Naive thymus-derived CD4-positive, alpha-beta T cell (primary cell): ENCODE measurements at regions of chr19 and their contacts with region 1.

Region 1: DNA sequence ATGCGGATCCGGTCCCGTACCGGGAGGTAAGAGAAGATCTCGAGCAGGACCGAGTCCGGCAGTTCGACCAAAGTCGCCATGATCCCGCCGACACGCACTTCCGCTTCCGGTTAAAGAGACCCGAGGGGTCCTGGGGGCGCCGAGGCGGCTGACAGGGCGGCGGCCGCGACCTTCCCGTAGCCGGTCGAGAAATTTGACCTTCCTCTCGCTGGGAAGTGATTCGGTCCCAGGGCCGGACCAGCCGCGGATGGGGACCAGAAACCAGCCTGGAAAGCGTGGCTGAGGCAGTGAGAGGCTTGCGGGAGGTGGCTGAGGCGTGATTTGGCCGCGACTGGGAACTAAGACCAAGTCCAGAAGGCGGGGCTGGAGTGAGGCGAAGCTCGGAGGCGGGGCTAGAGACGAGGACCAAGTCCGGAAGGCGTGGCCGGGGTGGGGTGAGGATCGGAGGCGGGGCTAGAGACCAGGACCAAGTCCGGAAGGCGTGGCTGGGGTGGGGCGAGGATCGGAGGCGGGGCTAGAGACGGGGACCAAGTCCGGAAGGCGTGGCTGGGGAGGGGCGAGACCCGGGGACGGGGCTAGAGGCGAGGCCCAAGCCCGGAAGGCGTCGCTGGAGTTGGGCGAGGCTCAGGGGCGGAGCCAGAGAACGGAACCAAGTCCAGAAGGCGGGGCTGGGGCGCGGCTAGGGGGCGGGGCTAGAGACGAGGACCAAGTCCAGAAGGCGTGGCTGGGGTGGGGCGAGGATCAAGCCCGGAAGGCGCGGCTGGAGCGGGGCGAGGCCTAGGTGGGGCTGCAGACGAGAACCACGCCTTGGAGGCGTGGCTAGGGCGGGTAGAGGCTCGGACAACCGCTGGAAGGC is at the start of gene FBXL12:
- DNase-seq: peak; percentile 99 to 100 (median 100)
- ATAC-seq: peak; percentile 93
- H3K4me3 ChIP-seq: peak within 1 kb of the TSS; percentile 100
- H3K4me3 Mint-ChIP-seq: peak within 1 kb of the TSS; percentile 81 to 96 (median 90)
- H3K27ac ChIP-seq: peak within 1 kb of the TSS; percentile 99
- H3K27ac Mint-ChIP-seq: peak within 1 kb of the TSS; percentile 78 to 97 (median 90)
- H3K4me1 ChIP-seq: peaks cover 9 to 14% of the 10 kb centered on the region in 2 donors
- H3K4me1 Mint-ChIP-seq: peaks cover 19 to 43% (median 30%) of the 10 kb centered on the region in 7 donors
- H3K27me3 ChIP-seq: no peaks in the 10 kb centered on the region
- H3K27me3 Mint-ChIP-seq: no peaks in the 10 kb centered on the region
- total RNA-seq, gene FBXL12: 16.8 to 36.2 (median 34.0) TPM

Region 2: DNA sequence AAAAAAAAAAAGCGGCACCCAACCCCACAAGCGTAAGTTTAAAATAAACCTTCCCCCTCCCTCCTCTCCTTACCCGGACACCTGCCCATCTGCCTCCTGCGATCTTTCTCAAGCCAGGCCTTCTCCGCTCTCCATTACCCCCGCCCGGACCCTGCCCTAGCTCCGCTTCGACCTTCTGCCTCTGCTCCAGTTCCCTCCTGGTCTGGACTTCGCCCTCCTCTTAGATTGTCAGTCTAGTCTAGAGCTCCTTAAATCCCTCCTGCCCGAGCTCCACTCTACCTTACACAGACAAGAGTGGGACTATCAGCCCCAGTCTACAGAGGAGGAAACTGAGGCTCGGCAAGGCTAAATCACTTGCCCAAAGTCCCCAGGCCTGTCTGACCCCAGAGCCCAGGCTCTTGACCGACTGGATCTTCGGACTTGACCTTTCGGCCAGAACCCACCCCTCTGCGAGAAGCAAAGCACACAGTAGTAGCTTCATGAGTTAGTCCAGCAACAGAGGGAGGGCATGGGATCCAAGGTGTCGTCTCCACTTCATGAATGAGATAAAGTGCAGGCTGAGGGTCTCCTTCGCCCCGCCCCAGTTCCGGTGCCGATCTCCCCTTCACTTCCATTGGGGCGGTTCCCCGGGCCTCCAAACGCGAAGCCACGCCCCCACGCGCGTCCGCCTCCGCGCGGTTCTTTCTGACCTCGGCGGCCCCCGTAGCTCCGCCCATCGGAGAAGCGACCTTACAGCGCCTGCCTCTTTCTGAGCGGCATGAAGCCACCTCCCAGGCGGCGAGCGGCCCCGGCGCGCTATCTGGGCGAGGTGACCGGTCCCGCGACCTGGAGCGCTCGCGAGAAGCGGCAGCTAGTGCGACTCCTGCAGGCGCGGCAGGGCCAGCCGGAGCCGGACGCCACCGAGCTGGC is 1899.1 kb before region 1 on chr19 and contains the start of gene SNAPC2:
- CTCF ChIA-PET with region 1: no interaction called
- POLR2A ChIA-PET with region 1: no interaction called
- intact Hi-C with region 1: loop called in 1 of 2 experiments (anchors 5 kb)
- DNase-seq: peak; percentile 95 to 99 (median 98)
- ATAC-seq: peak; percentile 71
- H3K4me3 ChIP-seq: peak within 1 kb of the TSS; percentile 86
- H3K4me3 Mint-ChIP-seq: peak within 1 kb of the TSS; percentile 88 to 97 (median 94)
- H3K27ac ChIP-seq: peak within 1 kb of the TSS; percentile 75
- H3K27ac Mint-ChIP-seq: peak within 1 kb of the TSS; percentile 76 to 97 (median 92)
- H3K4me1 ChIP-seq: peaks cover 25 to 34% of the 10 kb centered on the region in 2 donors
- H3K4me1 Mint-ChIP-seq: peaks cover 15 to 52% (median 38%) of the 10 kb centered on the region in 7 donors
- H3K27me3 ChIP-seq: peaks cover 3 to 20% of the 10 kb centered on the region in 2 donors
- H3K27me3 Mint-ChIP-seq: peaks cover 12 to 33% (median 14%) of the 10 kb centered on the region in 5 donors
- total RNA-seq, gene SNAPC2: 12.3 to 24.4 (median 21.4) TPM

Region 3: DNA sequence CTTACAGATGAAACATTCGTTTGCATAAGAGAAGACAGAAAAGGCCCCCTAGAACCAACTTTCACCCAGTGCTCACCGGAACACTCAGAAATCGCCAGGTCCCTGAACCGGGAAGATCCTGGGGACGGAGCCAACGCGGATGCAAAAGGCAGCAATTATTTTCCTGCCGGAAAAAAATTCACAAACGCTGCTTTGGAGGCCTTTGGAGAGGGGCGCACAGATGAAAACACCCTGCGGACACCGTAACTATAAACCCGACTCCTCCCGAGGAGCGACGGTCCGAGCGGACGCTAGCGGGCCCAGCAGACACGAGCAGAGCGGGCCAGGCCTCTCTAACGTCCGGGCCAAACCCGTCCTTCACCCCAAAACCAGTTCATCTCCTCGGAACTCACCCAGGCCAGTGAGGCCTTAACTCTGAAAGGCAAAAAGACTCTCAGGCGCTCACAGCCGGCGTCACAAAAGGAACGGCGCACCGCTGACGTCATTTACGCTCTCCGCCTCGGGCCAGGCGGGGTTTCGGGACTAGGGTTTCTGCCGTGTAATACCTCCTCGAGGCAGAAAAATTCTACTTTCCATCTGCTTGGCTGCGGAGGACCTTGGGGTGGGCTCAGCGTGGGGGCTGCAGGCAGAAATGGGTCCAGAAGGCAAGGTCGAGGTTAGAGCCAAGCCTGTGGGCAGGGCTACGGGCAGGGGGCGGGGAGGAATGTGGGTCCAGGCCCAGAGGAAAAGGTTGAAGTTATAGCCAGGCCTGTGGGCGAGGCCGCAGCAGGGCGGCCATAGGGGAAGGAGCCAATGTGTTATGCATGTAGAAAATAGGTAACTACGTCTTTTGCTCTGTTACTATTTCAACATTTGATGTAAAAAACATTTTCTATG is 280.5 kb before region 1 on chr19 and contains the start of gene ZNF426:
- CTCF ChIA-PET with region 1: no interaction called
- POLR2A ChIA-PET with region 1: no interaction called
- intact Hi-C with region 1: loop called in 1 of 2 experiments (anchors 2 kb)
- DNase-seq: peak; percentile 76 to 90 (median 85)
- ATAC-seq: peak; percentile 96
- H3K4me3 ChIP-seq: peak within 1 kb of the TSS; percentile 93
- H3K4me3 Mint-ChIP-seq: peak within 1 kb of the TSS; percentile 89 to 99 (median 98)
- H3K27ac ChIP-seq: peak within 1 kb of the TSS; percentile 90
- H3K27ac Mint-ChIP-seq: peak within 1 kb of the TSS; percentile 95 to 100 (median 97)
- H3K4me1 ChIP-seq: peaks cover 0 to 7% of the 10 kb centered on the region in 2 donors
- H3K4me1 Mint-ChIP-seq: peaks cover 14 to 46% (median 33%) of the 10 kb centered on the region in 7 donors
- H3K27me3 ChIP-seq: no peaks in the 10 kb centered on the region
- H3K27me3 Mint-ChIP-seq: no peaks in the 10 kb centered on the region
- total RNA-seq, gene ZNF426: 11.2 to 22.6 (median 15.8) TPM

Region 4: GRCh38 chr19:9552536-9553274 is 266.3 kb before region 1 on chr19:
- CTCF ChIA-PET with region 1: no interaction called
- POLR2A ChIA-PET with region 1: no interaction called
- intact Hi-C with region 1: no loop called
- DNase-seq: no peak
- ATAC-seq: no peak
- H3K4me3 ChIP-seq: no peak overlapping the region
- H3K4me3 Mint-ChIP-seq: peak overlapping the region in 1 of 10 donors; percentile 12
- H3K27ac ChIP-seq: no peak overlapping the region
- H3K27ac Mint-ChIP-seq: no peak overlapping the region
- H3K4me1 ChIP-seq: no peaks in the 10 kb centered on the region
- H3K4me1 Mint-ChIP-seq: no peaks in the 10 kb centered on the region
- H3K27me3 ChIP-seq: no peaks in the 10 kb centered on the region
- H3K27me3 Mint-ChIP-seq: peaks cover 0 to 9% (median 0%) of the 10 kb centered on the region in 5 donors

Region 5: DNA sequence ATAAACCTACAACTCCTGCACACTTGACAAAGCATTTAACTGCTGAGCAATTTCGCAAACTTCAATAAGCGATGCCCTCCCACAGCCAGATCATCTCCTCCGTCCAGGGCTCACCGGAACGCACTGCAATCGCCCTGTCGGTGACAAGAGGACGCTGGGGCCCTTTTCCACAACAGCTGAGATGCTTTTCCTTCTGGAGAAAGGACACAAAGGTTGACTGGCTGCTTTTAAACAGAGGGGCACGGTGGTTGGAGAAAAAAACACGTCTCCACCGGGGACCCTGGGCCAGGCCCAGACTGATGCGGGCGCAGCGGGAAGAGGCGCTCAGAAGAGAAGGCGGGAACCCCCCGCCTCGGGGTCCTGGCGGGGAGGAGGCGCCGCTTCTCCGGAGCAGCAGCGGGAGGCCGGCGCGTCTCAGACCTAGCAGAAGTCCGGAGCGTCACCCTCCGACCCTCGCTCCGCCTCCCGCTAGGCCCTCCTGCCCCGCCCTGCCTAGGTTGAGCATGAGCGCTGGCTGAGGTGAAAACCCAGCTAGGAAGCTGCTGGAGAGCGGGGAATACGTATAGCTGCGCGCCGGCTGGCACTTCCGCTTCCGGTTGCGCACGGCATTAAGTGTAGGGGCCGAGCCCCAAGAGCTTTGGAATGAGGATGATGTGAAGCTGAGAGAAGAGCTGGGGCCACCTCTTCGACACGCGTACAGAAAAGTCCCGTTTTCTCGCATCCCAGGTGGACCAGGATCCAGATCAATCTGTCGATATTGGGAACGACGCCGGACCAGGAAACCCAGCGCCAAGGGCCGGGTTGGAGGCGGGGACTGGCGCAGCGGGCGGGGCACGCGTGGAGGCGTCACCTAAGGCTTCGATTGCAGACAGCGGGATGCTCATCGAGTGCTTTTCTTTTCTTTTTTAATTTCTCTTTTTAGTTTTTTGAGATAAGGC is 50.5 kb before region 1 on chr19 and contains the start of gene ZNF846:
- CTCF ChIA-PET with region 1: no interaction called
- POLR2A ChIA-PET with region 1: interaction called, 4 read pairs
- intact Hi-C with region 1: loop called (anchors 1 kb)
- DNase-seq: peak; percentile 83 to 94 (median 91)
- ATAC-seq: peak; percentile 98
- H3K4me3 ChIP-seq: peak within 1 kb of the TSS; percentile 95
- H3K4me3 Mint-ChIP-seq: peak within 1 kb of the TSS; percentile 81 to 99 (median 95)
- H3K27ac ChIP-seq: peak within 1 kb of the TSS; percentile 93
- H3K27ac Mint-ChIP-seq: peak within 1 kb of the TSS; percentile 92 to 100 (median 97)
- H3K4me1 ChIP-seq: peaks cover 8 to 10% of the 10 kb centered on the region in 2 donors
- H3K4me1 Mint-ChIP-seq: peaks cover 0 to 21% (median 9%) of the 10 kb centered on the region in 7 donors
- H3K27me3 ChIP-seq: no peaks in the 10 kb centered on the region
- H3K27me3 Mint-ChIP-seq: no peaks in the 10 kb centered on the region
- total RNA-seq, gene ZNF846: 5.1 to 24.8 (median 13.0) TPM

Region 6: GRCh38 chr19:9857920-9858746 is 39.2 kb after region 1 on chr19:
- CTCF ChIA-PET with region 1: no interaction called
- POLR2A ChIA-PET with region 1: interaction called, 11 read pairs
- intact Hi-C with region 1: loop called in 1 of 2 experiments (anchors 1 kb)
- DNase-seq: peak in 7 of 9 donors; percentile 19 to 64 (median 57)
- ATAC-seq: peak; percentile 82
- H3K4me3 ChIP-seq: peak overlapping the region; percentile 70
- H3K4me3 Mint-ChIP-seq: peak overlapping the region; percentile 91 to 100 (median 96)
- H3K27ac ChIP-seq: peak overlapping the region; percentile 67
- H3K27ac Mint-ChIP-seq: peak overlapping the region; percentile 94 to 99 (median 98)
- H3K4me1 ChIP-seq: peaks cover 56 to 72% of the 10 kb centered on the region in 2 donors
- H3K4me1 Mint-ChIP-seq: peaks cover 48 to 96% (median 85%) of the 10 kb centered on the region in 7 donors
- H3K27me3 ChIP-seq: no peaks in the 10 kb centered on the region
- H3K27me3 Mint-ChIP-seq: no peaks in the 10 kb centered on the region

Region 7: GRCh38 chr19:10835754-10836477 is 1017.0 kb after region 1 on chr19 and contains the start of gene TMED1:
- CTCF ChIA-PET with region 1: no interaction called
- POLR2A ChIA-PET with region 1: no interaction called
- intact Hi-C with region 1: loop called in 1 of 2 experiments (anchors 5 kb)
- DNase-seq: peak; percentile 81 to 97 (median 93)
- ATAC-seq: peak; percentile 92
- H3K4me3 ChIP-seq: peak within 1 kb of the TSS; percentile 98
- H3K4me3 Mint-ChIP-seq: peak within 1 kb of the TSS; percentile 82 to 99 (median 96)
- H3K27ac ChIP-seq: peak within 1 kb of the TSS; percentile 93
- H3K27ac Mint-ChIP-seq: peak within 1 kb of the TSS; percentile 98 to 100 (median 99)
- H3K4me1 ChIP-seq: peaks cover 8 to 13% of the 10 kb centered on the region in 2 donors
- H3K4me1 Mint-ChIP-seq: peaks cover 12 to 20% (median 15%) of the 10 kb centered on the region in 7 donors
- H3K27me3 ChIP-seq: no peaks in the 10 kb centered on the region
- H3K27me3 Mint-ChIP-seq: no peaks in the 10 kb centered on the region
- total RNA-seq, gene TMED1: 7.6 to 12.8 (median 9.9) TPM